ENCODE measurements at regions of chr1 and their contacts with region 1.

Region 1: DNA sequence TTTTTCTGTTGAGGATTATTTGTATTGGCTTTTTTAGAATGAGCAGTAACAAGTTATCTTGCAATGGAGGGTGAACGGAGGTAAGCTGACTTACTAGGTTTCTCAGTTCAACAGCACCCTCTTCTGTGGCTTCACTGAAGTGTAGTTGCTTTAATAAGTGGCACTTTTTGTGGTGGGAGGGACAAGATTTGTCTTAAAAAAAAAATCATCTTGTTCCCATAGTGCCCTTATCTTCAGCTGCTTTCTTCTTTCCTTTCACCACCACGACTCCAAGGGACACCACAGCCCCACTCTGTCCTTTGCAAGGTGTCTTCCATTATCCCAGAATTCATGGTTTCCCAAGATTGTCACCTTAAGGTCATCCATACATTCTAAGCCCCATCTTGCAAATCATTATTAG is 92.9 kb downstream of the PIGK start:
- DNase-seq: no peak

Region 2: DNA sequence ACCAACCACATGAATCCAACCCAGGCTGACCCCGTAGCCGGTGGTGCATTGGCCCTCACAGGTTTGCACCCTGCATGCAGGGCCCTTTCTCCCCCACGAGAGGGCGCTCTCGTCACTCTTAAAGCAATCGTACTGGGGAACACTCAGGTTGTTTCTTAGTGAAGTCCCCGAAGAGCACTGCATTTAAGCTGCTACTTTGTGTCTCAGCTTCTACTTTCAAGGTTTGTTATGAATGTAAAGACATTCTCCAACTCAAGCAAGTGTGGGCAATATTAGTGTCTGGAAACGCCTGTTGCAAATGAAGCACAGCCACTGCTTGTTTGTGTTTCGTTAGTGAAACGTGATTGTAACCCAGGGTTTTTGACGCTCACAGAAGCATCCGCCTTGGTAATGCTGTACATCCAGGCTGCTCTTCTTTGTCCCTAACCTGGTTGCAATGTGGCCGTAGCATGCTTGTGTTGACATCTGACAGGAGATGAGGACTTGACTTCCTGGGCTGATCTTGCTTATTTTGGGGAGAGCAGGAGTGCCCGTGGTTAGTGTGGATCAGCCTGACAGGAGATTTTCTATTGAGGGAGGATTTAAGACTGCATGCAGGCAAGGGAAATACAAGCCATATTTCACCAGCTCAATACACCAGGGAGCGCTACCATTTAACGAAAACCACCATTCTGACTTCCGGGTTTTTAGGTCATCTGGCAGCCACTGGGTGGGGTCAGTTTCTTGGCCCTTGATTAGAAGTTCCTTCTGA is 971.9 kb before region 1 on chr1:
- intact Hi-C with region 1: loop called (anchors 5 kb)
- DNase-seq: peak; percentile 86

Region 3: GRCh38 chr1:76330991-76331603 is 795.2 kb before region 1 on chr1:
- intact Hi-C with region 1: loop called (anchors 10 kb)
- DNase-seq: no peak

Measured in cardiac septum (tissue), 1 donor.